ENCODE measurements at regions of chr17 and their contacts with region 1.

Region 1: DNA sequence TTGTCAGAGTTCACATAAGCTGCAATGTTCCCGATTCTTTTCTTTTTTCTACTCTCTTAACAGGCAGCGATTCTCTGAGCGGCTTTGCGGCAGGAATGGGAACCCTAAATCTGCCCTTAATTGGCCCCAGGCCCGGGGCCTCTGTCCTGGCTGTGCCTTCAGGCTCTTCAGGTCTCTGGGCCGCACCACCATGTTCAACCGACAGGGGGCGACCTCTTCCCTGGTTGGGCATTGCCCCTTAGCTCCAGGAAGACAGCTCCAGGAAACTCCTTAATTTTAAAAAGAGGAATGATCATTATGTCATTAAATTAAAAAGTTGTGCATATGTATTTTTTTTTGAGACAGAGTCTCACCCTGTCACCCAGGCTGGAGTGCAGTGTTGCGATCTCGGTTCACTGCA is 20.3 kb downstream of the CACNG5 start:
- DNase-seq: peak in 1 of 2 donors; percentile 37
- ATAC-seq: no peak
- H3K4me3 ChIP-seq: no peak overlapping the region
- H3K4me3 Mint-ChIP-seq: no peak overlapping the region
- H3K27ac ChIP-seq: no peak overlapping the region
- H3K27ac Mint-ChIP-seq: no peak overlapping the region
- H3K4me1 ChIP-seq: no peaks in the 10 kb centered on the region
- H3K4me1 Mint-ChIP-seq: no peaks in the 10 kb centered on the region
- H3K27me3 ChIP-seq: no peaks in the 10 kb centered on the region
- H3K27me3 Mint-ChIP-seq: peaks cover 10 to 16% of the 10 kb centered on the region in 2 donors
- CTCF ChIP-seq: peak; percentile 45

Region 2: GRCh38 chr17:65438708-65439294 is 1416.4 kb before region 1 on chr17:
- intact Hi-C with region 1: loop called (anchors 10 kb)
- DNase-seq: no peak
- ATAC-seq: peak in 1 of 3 donors; percentile 25
- H3K4me3 ChIP-seq: no peak overlapping the region
- H3K4me3 Mint-ChIP-seq: no peak overlapping the region
- H3K27ac ChIP-seq: no peak overlapping the region
- H3K27ac Mint-ChIP-seq: no peak overlapping the region
- H3K4me1 ChIP-seq: no peaks in the 10 kb centered on the region
- H3K4me1 Mint-ChIP-seq: no peaks in the 10 kb centered on the region
- H3K27me3 ChIP-seq: peaks cover 7% of the 10 kb centered on the region
- H3K27me3 Mint-ChIP-seq: peaks cover 26 to 74% of the 10 kb centered on the region in 2 donors
- CTCF ChIP-seq: no peak

Region 3: GRCh38 chr17:66906321-66907278 is 51.4 kb after region 1 on chr17:
- intact Hi-C with region 1: no loop called
- DNase-seq: peak; percentile 45 to 80
- ATAC-seq: peak; percentile 55 to 83 (median 72)
- H3K4me3 ChIP-seq: no peak overlapping the region
- H3K4me3 Mint-ChIP-seq: no peak overlapping the region
- H3K27ac ChIP-seq: no peak overlapping the region
- H3K27ac Mint-ChIP-seq: no peak overlapping the region
- H3K4me1 ChIP-seq: no peaks in the 10 kb centered on the region
- H3K4me1 Mint-ChIP-seq: peaks cover 6 to 8% of the 10 kb centered on the region in 2 donors
- H3K27me3 ChIP-seq: no peaks in the 10 kb centered on the region
- H3K27me3 Mint-ChIP-seq: peaks cover 0 to 8% of the 10 kb centered on the region in 2 donors
- CTCF ChIP-seq: peak; percentile 86

Measured in natural killer cell (primary cell).